ENCODE measurements at regions of chr14 and their contacts with region 1.

Region 1: DNA sequence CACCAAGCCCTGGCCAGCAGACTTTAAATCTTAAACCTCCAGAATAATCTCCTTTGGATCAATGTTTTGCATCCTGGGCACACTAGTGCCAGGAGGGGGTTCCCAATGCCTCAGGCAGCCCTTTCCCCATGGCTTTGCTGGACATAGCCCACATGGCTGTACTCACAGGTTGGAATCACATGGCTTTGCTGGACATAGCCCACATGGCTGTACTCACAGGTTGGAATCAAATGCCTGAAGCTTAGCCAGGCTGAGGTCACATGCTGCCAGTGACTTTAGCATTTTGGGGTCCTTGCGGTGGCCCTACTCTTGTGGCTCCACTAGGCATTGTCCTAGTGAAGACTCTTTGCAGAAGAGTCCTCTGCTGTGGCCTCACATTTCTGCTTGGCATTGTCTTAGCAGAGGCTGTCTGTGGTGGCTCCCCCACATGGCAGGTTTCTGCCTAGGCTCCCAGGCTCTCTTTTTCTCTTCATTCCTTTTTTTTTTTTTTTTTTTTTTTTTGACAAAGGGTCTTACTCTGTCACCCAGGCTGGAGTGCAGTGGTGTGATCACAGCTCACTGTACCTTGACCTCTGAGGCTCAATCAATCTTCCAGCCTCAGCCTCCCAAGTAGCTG is 13.0 kb downstream of the FLVCR2 start:
- DNase-seq: no peak
- H3K4me3 ChIP-seq: no peak overlapping the region
- H3K27ac ChIP-seq: no peak overlapping the region
- H3K27me3 ChIP-seq: peaks cover 0 to 3% (median 0%) of the 10 kb centered on the region in 45 donors
- CTCF ChIP-seq: peak in 1 of 56 donors; percentile 14

Region 2: DNA sequence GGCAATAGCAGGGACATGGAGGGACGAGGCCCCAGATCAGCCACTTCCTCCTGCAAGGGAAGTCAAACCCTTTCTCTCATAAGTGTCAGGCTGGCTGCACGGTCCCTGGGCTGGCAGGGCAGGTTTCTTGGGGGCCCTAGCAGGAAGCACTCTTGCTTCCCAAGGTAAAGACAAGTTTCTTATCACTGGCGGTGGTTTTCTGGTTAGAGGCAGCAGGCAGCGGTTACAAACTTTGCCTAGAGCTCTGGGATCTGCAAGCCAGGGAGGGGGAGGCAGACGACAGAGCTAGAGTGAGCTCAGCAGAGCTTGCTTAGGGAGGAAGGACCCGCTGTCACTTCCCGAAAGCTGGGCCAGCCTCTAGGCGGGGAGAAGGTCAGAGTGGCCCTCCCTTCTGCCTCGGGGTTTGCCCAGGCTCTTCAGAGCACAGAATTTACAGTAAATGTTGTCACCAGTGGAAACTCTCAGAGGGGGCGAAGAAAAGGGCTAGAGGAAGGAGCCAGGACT is 48.8 kb before region 1 on chr14:
- intact Hi-C with region 1: no loop called
- DNase-seq: peak in 2 of 10 donors; percentile 16 to 43
- H3K4me3 ChIP-seq: no peak overlapping the region
- H3K27ac ChIP-seq: peak overlapping the region in 18 of 59 donors; percentile 14 to 72 (median 36)
- H3K27me3 ChIP-seq: no peaks in the 10 kb centered on the region
- CTCF ChIP-seq: no peak

Region 3: DNA sequence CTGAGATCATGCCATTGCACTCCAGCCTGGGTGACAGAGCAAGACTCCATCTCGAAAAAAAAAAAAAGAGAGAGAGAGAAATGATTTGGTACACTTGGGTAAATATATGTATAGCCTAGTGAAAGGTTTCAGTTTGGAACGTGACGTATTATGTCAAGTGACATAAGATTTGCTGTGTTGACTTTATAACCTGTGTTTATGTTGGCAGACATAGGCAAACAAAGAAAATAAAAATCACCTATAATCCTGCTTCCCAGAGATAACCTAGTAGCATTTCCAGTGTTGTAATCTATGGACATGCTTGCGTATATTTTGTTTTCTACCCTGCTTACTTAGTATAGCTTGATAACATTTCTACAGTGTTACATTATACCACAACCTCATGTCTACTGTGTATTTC is 52.5 kb after region 1 on chr14:
- intact Hi-C with region 1: loop called in 1 of 2 experiments (anchors 5 kb)
- DNase-seq: no peak
- H3K4me3 ChIP-seq: no peak overlapping the region
- H3K27ac ChIP-seq: no peak overlapping the region
- H3K27me3 ChIP-seq: no peaks in the 10 kb centered on the region
- CTCF ChIP-seq: no peak

Region 4: GRCh38 chr14:75748336-75748735 is 156.9 kb after region 1 on chr14:
- intact Hi-C with region 1: no loop called
- DNase-seq: no peak
- H3K4me3 ChIP-seq: no peak overlapping the region
- H3K27ac ChIP-seq: no peak overlapping the region
- H3K27me3 ChIP-seq: no peaks in the 10 kb centered on the region
- CTCF ChIP-seq: no peak

Region 5: GRCh38 chr14:76056128-76056527 is 464.7 kb after region 1 on chr14:
- intact Hi-C with region 1: no loop called
- DNase-seq: no peak
- H3K4me3 ChIP-seq: no peak overlapping the region
- H3K27ac ChIP-seq: no peak overlapping the region
- H3K27me3 ChIP-seq: no peaks in the 10 kb centered on the region
- CTCF ChIP-seq: peak in 6 of 56 donors; percentile 7 to 31 (median 18)